GM12878 (cell line): ENCODE measurements at regions of chr22 and their contacts with region 1.

Region 1: GRCh38 chr22:37546437-37547255 is 13.6 kb upstream of the CDC42EP1 start:
- DNase-seq: no peak
- ATAC-seq: no peak
- H3K4me3 ChIP-seq: no peak overlapping the region
- H3K27ac ChIP-seq: no peak overlapping the region
- H3K4me1 ChIP-seq: peaks cover 8% of the 10 kb centered on the region
- H3K27me3 ChIP-seq: peaks cover 0 to 2% of the 10 kb centered on the region in 2 experiments; a peak in 1 of 4 replicates
- CTCF ChIP-seq: no peak
- EP300 ChIP-seq: no peak
- POLR2A ChIP-seq: no peak
- RAD21 ChIP-seq: no peak

Region 2: DNA sequence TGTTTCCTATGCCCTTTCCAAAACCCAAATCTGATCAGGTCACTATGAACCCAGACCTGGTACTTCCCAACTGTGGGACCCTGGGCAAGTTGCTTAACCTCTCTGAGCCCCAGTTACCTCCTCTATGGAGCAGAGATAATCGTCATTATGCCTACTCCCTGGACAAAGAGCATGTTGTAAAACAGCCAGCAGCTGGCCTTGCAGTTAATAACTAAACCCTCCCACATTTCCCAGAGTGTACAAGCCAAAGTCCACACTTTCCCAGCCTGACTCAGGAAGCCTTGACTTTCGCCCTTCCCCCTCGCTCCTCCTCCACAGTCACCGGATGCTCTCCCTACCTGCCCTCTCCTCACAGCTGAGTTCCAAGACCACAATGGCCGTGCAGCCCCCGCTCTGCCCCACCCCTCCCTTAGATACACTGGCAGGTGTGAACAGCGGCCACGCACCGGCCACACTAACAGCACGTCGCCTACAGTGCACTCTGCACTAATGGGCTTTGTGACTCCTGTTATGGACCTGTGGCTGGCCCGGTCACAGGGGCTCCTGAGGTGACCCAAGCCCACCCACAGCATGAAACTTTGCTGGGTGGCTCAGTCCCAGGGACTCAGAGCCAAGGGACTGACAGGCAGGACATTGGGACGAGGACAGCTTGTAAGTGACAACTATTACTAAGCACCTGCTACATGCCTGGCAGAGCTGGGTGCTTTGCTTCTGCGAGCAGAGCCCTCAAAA is 44.9 kb before region 1 on chr22:
- CTCF ChIA-PET with region 1: no interaction called
- POLR2A ChIA-PET with region 1: no interaction called
- RAD21 ChIA-PET with region 1: no interaction called
- SMC1A ChIA-PET with region 1: no interaction called
- in situ Hi-C with region 1: no loop called
- intact Hi-C with region 1: no loop called
- DNase-seq: no peak
- ATAC-seq: no peak
- H3K4me3 ChIP-seq: no peak overlapping the region
- H3K27ac ChIP-seq: no peak overlapping the region
- H3K4me1 ChIP-seq: no peaks in the 10 kb centered on the region
- H3K27me3 ChIP-seq: peaks cover 0 to 3% of the 10 kb centered on the region in 2 experiments; a peak in 2 of 4 replicates
- CTCF ChIP-seq: no peak
- EP300 ChIP-seq: no peak
- POLR2A ChIP-seq: no peak
- RAD21 ChIP-seq: no peak

Region 3: GRCh38 chr22:37561212-37562048 is 14.8 kb after region 1 on chr22:
- CTCF ChIA-PET with region 1: interaction called, 541 read pairs
- POLR2A ChIA-PET with region 1: interaction called, 39 read pairs
- RAD21 ChIA-PET with region 1: interaction called, 237 read pairs
- SMC1A ChIA-PET with region 1: interaction called, 179 read pairs
- in situ Hi-C with region 1: no loop called
- intact Hi-C with region 1: no loop called
- DNase-seq: no peak
- ATAC-seq: peak; percentile 80
- H3K4me3 ChIP-seq: 0 out of 2 replicates have a peak overlapping the region, but pooled peaks have one; percentile 11
- H3K27ac ChIP-seq: no peak overlapping the region
- H3K4me1 ChIP-seq: peaks cover 3% of the 10 kb centered on the region
- H3K27me3 ChIP-seq: peaks cover 16% of the 10 kb centered on the region in 2 experiments
- CTCF ChIP-seq: peak; percentile 58 to 82 (median 71)
- EP300 ChIP-seq: no peak
- POLR2A ChIP-seq: no peak
- RAD21 ChIP-seq: peak; percentile 29; the same call in 1 of the 2 replicates

Region 4: DNA sequence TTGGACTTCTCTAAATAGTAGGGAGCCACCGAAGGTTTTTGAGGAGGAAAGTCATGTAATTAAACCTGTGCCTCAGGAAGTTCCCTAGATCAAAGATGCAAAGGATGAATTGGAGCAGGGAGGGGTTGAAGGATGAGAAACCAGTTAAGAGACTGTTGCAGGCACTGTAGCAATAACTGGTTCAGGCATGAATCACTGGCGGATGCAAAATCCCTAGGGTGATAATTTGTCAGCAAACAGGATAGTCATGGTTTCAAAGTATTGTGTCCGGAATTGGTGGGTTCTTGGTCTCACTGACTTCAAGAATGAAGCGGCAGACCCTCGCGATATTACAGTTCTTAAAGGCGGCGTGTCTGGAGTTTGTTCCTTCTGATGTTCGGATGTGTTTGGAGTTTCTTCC is 170.1 kb after region 1 on chr22:
- CTCF ChIA-PET with region 1: no interaction called
- POLR2A ChIA-PET with region 1: no interaction called
- RAD21 ChIA-PET with region 1: no interaction called
- SMC1A ChIA-PET with region 1: no interaction called
- in situ Hi-C with region 1: no loop called
- intact Hi-C with region 1: no loop called
- DNase-seq: no peak
- ATAC-seq: no peak
- H3K4me3 ChIP-seq: no peak overlapping the region
- H3K27ac ChIP-seq: no peak overlapping the region
- H3K4me1 ChIP-seq: no peaks in the 10 kb centered on the region
- H3K27me3 ChIP-seq: no peaks in the 10 kb centered on the region
- CTCF ChIP-seq: no peak
- EP300 ChIP-seq: no peak
- POLR2A ChIP-seq: no peak
- RAD21 ChIP-seq: no peak